Ovary (tissue), 10 donors: ENCODE measurements at regions of chr3 and their contacts with region 1.

Region 1: DNA sequence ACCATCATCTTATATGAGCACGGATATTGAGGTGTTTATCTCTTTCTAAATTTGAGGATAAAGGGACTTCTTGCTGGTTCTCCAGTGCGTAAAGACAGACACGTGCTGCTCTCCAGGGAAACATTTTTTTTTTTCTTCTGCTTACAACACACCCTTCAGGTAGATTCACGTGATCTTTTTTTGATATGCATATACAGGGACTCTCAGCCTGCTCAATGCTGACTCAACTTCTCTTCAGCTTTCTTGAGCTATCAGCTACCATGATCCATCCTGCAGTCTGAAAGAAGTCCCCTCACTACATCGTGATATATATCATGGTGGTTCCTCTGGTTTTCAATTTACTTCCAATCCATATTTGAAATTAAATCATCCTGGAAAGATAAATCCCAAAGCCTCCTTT is 87.1 kb upstream of the SLITRK3 start:
- DNase-seq: no peak
- H3K4me3 ChIP-seq: no peak overlapping the region
- H3K27ac ChIP-seq: no peak overlapping the region
- H3K4me1 ChIP-seq: no peaks in the 10 kb centered on the region
- H3K27me3 ChIP-seq: peaks cover 2% of the 10 kb centered on the region
- CTCF ChIP-seq: no peak
- EP300 ChIP-seq: no peak
- POLR2A ChIP-seq: no peak

Region 2: GRCh38 chr3:164144824-164145223 is 1138.5 kb before region 1 on chr3:
- intact Hi-C with region 1: loop called in 1 of 4 experiments (anchors 5 kb)
- DNase-seq: no peak
- H3K4me3 ChIP-seq: no peak overlapping the region
- H3K27ac ChIP-seq: no peak overlapping the region
- H3K4me1 ChIP-seq: no peaks in the 10 kb centered on the region
- H3K27me3 ChIP-seq: no peaks in the 10 kb centered on the region
- CTCF ChIP-seq: no peak
- EP300 ChIP-seq: no peak
- POLR2A ChIP-seq: no peak